Mammary epithelial cell (primary cell): ENCODE measurements at regions of chr20 and their contacts with region 1.

Region 1: GRCh38 chr20:2451939-2452732 is 18.5 kb downstream of the SNRPB start:
- DNase-seq: peak; percentile 70
- H3K4me3 ChIP-seq: no peak overlapping the region
- H3K27ac ChIP-seq: no peak overlapping the region
- H3K4me1 ChIP-seq: peaks cover 11% of the 10 kb centered on the region
- H3K27me3 ChIP-seq: no peaks in the 10 kb centered on the region
- CTCF ChIP-seq: peak; percentile 90 to 92

Region 2: DNA sequence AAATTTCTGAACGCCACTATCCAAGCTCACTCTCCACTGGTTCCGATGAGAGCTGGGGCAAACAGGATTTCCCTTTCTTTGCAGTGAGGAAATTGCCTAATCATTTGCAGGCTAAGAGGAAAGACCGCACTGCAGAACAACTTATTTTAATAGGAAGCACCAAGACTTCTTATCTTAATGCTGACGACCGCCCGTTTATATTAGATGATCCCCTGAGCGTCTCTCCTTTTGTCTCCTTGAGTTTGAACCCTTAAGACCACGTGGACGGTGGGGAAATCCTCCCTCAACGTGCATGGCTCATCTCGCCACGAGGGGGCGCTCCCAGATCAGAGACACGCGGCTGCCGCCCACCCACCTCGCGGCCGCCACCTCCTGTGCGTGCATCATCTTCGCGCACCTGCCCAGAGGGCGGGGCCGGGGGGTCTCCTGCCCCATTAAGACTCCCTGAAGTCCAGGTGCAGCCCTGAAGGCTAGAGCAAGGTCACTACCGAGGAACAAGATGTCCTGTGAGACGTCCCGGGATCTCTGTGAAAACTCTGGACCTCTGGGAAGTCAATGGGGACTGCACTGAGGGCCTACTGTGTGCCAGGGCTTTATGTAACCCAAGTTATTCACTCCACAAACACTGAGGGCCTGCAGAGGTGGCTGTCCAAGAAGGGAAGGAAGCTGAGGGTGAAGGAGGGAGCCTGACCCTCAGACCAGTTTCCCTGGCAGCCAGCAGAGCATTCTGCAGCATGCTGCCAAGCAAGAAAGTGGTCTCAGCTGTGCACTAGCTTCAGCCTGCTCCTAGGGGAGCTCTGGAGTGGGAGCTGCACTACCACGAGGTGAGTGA is 486.4 kb before region 1 on chr20:
- CTCF ChIA-PET with region 1: no interaction called
- dilution Hi-C with region 1: no loop called
- in situ Hi-C with region 1: no loop called
- intact Hi-C with region 1: loop called (anchors 1 kb)
- DNase-seq: peak; percentile 37
- H3K4me3 ChIP-seq: no peak overlapping the region
- H3K27ac ChIP-seq: no peak overlapping the region
- H3K4me1 ChIP-seq: peaks cover 3% of the 10 kb centered on the region
- H3K27me3 ChIP-seq: no peaks in the 10 kb centered on the region
- CTCF ChIP-seq: peak; percentile 82 to 94

Region 3: DNA sequence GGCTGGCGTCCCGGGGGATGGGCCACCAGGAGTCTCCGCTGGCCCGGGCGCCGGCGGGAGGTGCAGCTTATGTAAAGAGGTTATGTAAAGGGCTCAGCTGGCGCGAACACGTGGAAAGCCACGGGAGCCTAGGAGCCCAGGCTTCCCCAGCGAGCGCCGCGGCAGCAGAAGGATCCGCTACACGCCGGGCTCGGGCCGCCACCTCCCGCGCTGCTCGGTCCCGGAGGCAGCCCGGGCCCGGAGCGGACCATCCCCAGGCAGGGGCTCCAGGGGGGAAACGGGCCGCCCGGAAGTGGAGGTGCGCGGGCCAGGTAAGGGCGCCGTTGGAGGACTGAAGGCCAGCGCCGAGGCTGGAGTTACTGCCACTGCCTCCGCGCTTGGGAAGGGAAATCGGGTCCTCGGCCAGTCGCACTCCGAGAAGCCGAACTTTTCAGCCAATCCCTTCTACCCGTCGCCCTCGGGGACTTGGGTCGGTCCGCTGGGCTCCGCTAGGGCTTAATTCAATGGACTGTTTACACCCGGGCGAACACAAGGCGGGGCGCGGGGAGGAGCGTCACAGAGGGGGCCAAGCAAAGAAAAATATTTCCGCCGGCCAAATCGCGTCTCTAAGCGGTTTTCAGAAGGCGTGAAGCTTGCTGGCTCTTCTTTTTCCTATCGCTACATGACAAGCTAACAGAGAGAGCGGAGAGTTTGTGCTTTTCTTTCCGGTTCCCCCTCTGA is 350.1 kb before region 1 on chr20:
- CTCF ChIA-PET with region 1: no interaction called
- dilution Hi-C with region 1: no loop called
- in situ Hi-C with region 1: no loop called
- intact Hi-C with region 1: loop called (anchors 5 kb)
- DNase-seq: peak; percentile 91
- H3K4me3 ChIP-seq: peak overlapping the region; percentile 77 to 91 (median 89)
- H3K27ac ChIP-seq: peak overlapping the region; percentile 99
- H3K4me1 ChIP-seq: peaks cover 22% of the 10 kb centered on the region
- H3K27me3 ChIP-seq: no peaks in the 10 kb centered on the region
- CTCF ChIP-seq: no peak

Region 4: DNA sequence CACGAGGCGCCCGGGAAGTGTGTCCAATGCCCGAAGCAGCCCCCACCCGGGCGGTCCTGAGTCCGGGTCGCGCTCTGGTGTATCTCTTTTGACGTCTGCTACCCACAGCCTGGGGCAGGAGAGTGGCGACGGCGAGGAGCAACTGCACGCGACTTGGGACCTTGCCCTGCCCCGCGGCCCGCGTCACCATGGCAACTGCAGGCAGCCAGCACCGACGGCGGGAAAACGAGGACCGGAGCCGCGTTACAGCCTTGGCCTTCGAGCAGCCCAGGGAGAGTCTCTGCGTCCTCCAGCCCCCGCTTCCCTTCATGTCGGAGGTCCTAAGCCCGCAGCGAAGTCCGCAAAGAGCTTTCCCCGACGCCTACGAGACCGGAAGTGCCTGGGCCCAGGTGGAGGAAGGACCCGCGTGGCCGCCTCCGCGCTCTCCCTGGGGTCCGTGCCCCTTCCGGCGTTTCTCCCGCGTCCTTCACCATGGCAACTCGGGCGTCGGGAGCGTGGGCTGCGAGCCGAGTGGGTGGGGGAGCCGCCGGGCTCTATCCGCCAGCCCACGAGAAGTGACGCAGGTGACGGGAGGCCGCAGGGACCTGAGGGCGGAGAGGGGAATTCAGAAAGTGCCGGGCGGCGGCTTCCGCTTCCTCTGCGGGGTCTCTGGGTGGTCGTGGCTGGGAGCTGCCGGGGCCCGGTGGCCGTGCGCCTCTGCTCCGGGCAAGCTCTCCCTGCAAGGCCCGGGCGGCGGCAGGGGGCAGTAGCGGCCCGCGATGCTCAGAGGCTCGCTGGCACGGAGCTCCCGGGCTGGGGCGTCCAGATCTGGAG is 245.0 kb before region 1 on chr20:
- CTCF ChIA-PET with region 1: interaction called, 8 read pairs
- dilution Hi-C with region 1: no loop called
- in situ Hi-C with region 1: loop called (anchors 10 kb)
- intact Hi-C with region 1: loop called (anchors 1 kb)
- DNase-seq: peak; percentile 52
- H3K4me3 ChIP-seq: peak overlapping the region; percentile 55 to 67 (median 57)
- H3K27ac ChIP-seq: no peak overlapping the region
- H3K4me1 ChIP-seq: peaks cover 11% of the 10 kb centered on the region
- H3K27me3 ChIP-seq: peaks cover 3% of the 10 kb centered on the region
- CTCF ChIP-seq: peak; percentile 65 to 92

Region 5: DNA sequence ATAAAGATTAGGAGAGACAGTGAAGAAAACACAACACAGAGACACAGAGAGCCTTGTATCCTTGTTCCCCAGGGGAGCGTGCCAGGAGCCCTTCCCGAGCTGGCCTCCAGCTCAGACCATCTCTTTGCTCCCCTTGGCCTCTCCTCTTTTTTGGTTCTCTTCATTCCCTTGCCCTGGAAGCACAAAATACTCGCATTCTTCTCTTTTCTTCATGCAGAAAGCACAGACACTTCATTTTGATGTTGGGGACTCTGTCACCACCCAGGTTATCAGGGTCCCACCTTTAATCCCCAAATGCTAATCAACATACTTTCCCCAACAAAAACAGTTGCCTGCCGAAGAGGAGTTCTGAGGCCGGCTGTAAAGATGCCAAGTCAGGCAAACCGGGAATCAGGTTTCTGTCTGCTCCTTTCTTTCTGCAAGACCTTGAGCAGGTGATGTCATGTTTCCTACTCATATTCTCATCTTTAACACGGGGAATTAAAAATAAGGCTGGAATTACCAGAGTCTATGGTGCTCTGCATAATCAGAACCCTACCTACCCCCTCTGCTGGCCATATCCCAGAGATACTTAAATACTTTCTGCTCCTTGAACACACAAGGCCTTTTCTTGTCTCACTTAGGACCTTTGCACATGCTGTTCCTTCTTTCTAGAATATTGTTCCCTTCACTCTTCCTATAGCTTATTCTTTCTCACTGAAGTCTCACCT is 49.7 kb before region 1 on chr20:
- CTCF ChIA-PET with region 1: no interaction called
- dilution Hi-C with region 1: no loop called
- in situ Hi-C with region 1: no loop called
- intact Hi-C with region 1: loop called (anchors 5 kb)
- DNase-seq: peak; percentile 68
- H3K4me3 ChIP-seq: no peak overlapping the region
- H3K27ac ChIP-seq: no peak overlapping the region
- H3K4me1 ChIP-seq: no peaks in the 10 kb centered on the region
- H3K27me3 ChIP-seq: no peaks in the 10 kb centered on the region
- CTCF ChIP-seq: peak; percentile 51 to 61

Region 6: DNA sequence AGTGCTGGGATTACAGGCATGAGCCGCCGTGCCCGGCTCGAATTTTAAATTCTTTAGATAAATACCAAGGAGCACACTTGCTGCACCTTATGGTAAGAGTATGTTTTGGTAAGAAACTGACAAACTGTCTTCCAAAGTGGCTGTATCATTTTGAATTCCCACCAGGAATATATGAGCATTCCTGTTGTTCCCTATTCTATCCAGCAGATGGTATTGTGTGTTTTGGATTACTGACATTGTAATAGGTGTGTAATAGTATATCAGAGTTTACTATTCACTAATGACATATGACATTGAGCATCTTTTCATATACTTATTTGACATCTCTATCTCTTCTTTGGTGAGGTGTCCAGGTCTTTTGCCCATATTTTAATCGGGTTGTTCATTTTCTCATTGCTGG is 30.9 kb before region 1 on chr20:
- CTCF ChIA-PET with region 1: interaction called, 3 read pairs
- dilution Hi-C with region 1: no loop called
- in situ Hi-C with region 1: no loop called
- intact Hi-C with region 1: loop called (anchors 1 kb)
- DNase-seq: no peak
- H3K4me3 ChIP-seq: no peak overlapping the region
- H3K27ac ChIP-seq: no peak overlapping the region
- H3K4me1 ChIP-seq: no peaks in the 10 kb centered on the region
- H3K27me3 ChIP-seq: no peaks in the 10 kb centered on the region
- CTCF ChIP-seq: peak; percentile 37 to 41

Region 7: DNA sequence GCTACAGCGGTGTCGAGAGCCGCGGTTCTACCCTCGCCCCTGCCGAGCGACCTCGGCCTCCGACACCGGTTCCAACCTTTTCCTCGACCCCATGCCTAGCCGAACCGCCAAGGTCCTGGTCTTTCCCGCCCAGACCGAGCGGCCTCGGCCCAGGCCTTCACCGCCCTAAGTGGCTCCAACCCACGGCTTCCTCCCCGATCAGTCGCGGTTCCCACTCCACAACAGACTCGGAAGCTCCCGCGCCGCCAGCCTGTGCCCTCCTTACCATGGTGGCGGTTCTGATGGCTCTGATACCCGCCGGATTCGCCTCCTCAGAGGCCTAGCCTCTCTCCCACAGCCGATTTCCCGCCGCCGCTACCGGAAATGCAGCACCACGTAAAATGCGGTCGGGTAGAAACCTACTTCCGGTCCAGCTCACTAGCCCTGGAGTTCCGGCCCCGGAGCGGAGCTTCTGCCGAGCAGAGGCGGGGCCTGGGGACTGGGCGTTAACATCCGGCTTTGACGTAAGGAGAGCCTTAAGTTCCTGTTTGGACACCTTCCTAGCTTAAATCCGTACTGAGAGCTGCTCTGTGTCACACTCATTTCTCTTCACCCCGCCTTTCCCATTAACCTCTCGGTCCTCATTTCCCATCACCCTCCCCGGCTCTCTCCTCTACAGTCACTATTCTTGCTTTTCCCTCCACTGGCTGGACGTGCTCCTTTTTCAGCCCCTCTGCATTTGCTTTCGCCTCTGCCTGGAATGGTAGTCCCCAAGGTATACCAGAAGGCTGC is 18.5 kb after region 1 on chr20 and contains the start of gene SNRPB:
- CTCF ChIA-PET with region 1: no interaction called
- dilution Hi-C with region 1: no loop called
- in situ Hi-C with region 1: no loop called
- intact Hi-C with region 1: no loop called
- DNase-seq: peak; percentile 98
- H3K4me3 ChIP-seq: peak within 1 kb of the TSS; percentile 73 to 94 (median 83)
- H3K27ac ChIP-seq: peak within 1 kb of the TSS; percentile 88
- H3K4me1 ChIP-seq: peaks cover 19% of the 10 kb centered on the region
- H3K27me3 ChIP-seq: no peaks in the 10 kb centered on the region
- CTCF ChIP-seq: no peak
- total RNA-seq, gene SNRPB: 90.7 to 216 TPM

Region 8: DNA sequence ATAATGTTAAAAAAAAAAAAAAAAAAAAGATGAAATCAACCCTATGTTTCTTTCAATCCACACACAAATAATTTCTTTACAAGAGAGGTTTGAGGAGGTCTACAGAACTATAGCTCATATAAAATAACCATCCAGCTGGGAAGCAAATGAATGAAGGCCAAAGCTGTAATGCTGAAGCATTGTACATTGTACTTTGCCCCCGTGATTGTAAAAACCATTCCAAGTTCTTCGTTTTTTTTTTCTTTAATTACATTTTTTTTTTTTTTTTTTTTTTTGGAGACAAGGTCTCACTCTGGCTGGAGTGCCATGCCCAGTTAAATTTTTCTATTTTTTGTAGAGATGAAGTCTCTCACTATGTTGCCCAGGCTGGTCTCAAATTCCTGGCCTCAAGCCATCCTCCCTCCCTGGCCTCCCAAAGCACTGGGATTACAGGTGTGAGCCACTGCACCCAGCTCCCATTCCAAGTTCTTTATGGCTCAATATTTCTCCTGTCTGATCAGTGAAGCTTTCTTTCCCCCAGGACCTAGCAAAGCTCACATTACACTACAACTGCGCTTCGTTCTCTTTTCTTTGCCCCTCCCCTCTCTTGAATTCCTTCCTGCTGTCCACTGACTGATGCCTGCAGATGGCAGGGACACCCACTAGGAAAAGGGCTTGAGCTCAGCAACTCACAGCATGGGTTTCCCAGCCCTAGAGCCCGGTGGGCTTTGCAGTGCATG is 147.3 kb after region 1 on chr20:
- CTCF ChIA-PET with region 1: no interaction called
- dilution Hi-C with region 1: no loop called
- in situ Hi-C with region 1: no loop called
- intact Hi-C with region 1: no loop called
- DNase-seq: no peak
- H3K4me3 ChIP-seq: no peak overlapping the region
- H3K27ac ChIP-seq: no peak overlapping the region
- H3K4me1 ChIP-seq: no peaks in the 10 kb centered on the region
- H3K27me3 ChIP-seq: no peaks in the 10 kb centered on the region
- CTCF ChIP-seq: no peak

Region 9: DNA sequence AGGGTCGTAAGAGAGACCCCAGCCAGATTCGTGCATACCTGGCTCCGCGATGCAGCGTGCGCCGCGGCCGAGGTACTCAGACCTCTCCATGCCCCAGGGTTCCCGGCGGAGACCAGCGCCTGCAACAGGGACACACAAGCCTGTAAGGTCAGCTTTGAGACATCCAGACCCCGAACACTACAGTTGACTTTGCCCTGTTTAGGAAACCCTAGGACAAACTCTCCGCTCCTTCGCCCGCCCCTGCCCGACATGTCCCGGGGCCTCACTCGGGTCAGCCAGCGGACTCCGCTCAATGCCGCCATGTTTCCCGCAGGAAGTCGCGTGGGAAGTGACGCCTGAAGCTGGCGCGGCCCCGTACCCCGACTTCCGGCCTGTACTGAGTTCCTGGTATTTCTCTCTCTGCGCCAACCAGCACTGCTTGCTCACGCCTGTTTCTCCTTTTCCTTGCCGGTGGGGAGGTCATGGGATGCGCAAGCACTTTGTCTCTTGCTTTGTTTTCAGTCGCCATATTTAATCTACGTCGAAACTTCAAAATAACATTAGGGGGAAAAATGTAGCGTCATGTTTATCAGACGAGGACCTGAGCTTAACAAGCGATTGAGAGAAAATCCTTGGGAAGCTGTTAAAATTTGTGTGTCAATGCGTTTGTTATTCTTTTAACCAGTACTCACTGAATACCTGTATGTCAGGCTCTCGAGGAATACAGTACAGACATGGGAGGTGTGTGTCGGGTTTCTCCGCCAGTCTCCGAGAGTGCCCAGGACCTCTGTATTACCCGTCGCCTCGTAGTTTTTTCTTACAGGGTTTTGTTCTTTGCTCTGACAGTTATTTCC is 212.0 kb after region 1 on chr20 and contains the start of gene IDH3B:
- CTCF ChIA-PET with region 1: no interaction called
- dilution Hi-C with region 1: no loop called
- in situ Hi-C with region 1: no loop called
- intact Hi-C with region 1: no loop called
- DNase-seq: peak; percentile 87
- H3K4me3 ChIP-seq: peak within 1 kb of the TSS; percentile 83 to 93 (median 93)
- H3K27ac ChIP-seq: peak within 1 kb of the TSS; percentile 96
- H3K4me1 ChIP-seq: peaks cover 12% of the 10 kb centered on the region
- H3K27me3 ChIP-seq: no peaks in the 10 kb centered on the region
- CTCF ChIP-seq: no peak
- total RNA-seq, gene IDH3B: 50.0 to 78.5 TPM

Region 10: GRCh38 chr20:2800521-2801285 is 348.6 kb after region 1 on chr20 and contains the start of gene CPXM1:
- CTCF ChIA-PET with region 1: no interaction called
- dilution Hi-C with region 1: no loop called
- in situ Hi-C with region 1: no loop called
- intact Hi-C with region 1: no loop called
- DNase-seq: no peak
- H3K4me3 ChIP-seq: peak within 1 kb of the TSS in 1 of 3 experiments; percentile 26
- H3K27ac ChIP-seq: no peak within 1 kb of the TSS
- H3K4me1 ChIP-seq: peaks cover 6% of the 10 kb centered on the region
- H3K27me3 ChIP-seq: peaks cover 27% of the 10 kb centered on the region
- CTCF ChIP-seq: no peak
- total RNA-seq, gene CPXM1: under 0.01 TPM in 1 of 2 donors, not detected in the other